ENCODE measurements at regions of chr7 and their contacts with region 1.

Region 1: DNA sequence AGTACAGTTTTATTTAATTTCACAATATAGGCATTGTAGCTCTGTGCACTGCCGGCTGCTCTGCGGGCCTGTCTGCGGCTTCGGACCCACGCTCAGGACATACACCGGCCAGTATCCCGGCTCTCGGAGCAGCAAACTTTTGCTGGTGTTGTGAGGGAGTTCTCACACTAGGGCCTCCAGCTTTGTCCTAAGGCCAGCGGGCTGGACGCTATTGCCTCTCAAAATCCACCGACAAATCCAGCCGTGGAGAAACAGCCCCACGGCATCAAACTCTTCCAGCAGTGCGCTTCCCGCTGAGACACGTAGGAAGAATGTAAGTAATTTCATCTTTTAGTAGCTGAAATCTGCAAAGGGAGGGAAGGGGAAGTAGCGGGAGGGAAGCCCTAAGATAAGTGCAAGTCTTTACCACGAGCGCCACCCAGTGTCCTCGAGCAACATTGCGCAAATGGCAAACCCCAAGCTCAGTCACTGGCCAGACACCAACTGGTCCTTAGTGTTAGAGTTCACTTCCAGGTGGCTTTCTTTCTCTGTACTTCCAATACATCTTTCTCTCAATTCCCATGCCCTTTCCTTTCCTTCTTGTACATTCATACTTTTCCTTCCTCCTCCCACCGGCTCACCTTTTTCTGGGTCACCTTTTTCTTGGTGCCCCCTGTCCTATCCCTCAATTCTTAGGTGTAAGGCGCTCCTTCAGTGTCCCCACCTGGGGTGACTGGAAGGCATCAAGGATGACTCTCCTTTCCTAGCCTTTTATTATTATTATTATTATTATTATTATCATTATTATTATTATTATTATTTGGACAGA is 3.0 kb upstream of the DLX5 start:
- DNase-seq: peak in 4 of 5 donors; percentile 57 to 66 (median 61)
- H3K4me3 ChIP-seq: peak overlapping the region in 1 of 2 donors; percentile 26
- H3K4me3 Mint-ChIP-seq: peak overlapping the region; percentile 77 to 88 (median 84)
- H3K27ac ChIP-seq: no peak overlapping the region
- H3K27ac Mint-ChIP-seq: peak overlapping the region in 2 of 7 donors; percentile 42 to 53
- H3K4me1 ChIP-seq: peaks cover 17% of the 10 kb centered on the region
- H3K4me1 Mint-ChIP-seq: peaks cover 28 to 43% (median 36%) of the 10 kb centered on the region in 4 donors
- H3K27me3 ChIP-seq: peaks cover 43% of the 10 kb centered on the region
- H3K27me3 Mint-ChIP-seq: peaks cover 51 to 64% of the 10 kb centered on the region in 2 donors

Region 2: GRCh38 chr7:96075510-96076349 is 951.9 kb before region 1 on chr7:
- CTCF ChIA-PET with region 1: interaction called, 37 read pairs
- POLR2A ChIA-PET with region 1: interaction called, 4 read pairs
- intact Hi-C with region 1: loop called (anchors 1 kb)
- DNase-seq: peak; percentile 36 to 49 (median 42)
- H3K4me3 ChIP-seq: peak overlapping the region in 1 of 2 donors; percentile 30
- H3K4me3 Mint-ChIP-seq: peak overlapping the region; percentile 86 to 95 (median 88)
- H3K27ac ChIP-seq: no peak overlapping the region
- H3K27ac Mint-ChIP-seq: no peak overlapping the region
- H3K4me1 ChIP-seq: peaks cover 10% of the 10 kb centered on the region
- H3K4me1 Mint-ChIP-seq: peaks cover 0 to 9% (median 6%) of the 10 kb centered on the region in 4 donors
- H3K27me3 ChIP-seq: peaks cover 15% of the 10 kb centered on the region
- H3K27me3 Mint-ChIP-seq: peaks cover 17 to 27% of the 10 kb centered on the region in 2 donors

Region 3: GRCh38 chr7:96414931-96415292 is 612.7 kb before region 1 on chr7:
- CTCF ChIA-PET with region 1: interaction called, 10 read pairs
- POLR2A ChIA-PET with region 1: no interaction called
- intact Hi-C with region 1: no loop called
- DNase-seq: peak; percentile 20 to 47 (median 43)
- H3K4me3 ChIP-seq: no peak overlapping the region
- H3K4me3 Mint-ChIP-seq: no peak overlapping the region
- H3K27ac ChIP-seq: no peak overlapping the region
- H3K27ac Mint-ChIP-seq: no peak overlapping the region
- H3K4me1 ChIP-seq: no peaks in the 10 kb centered on the region
- H3K4me1 Mint-ChIP-seq: no peaks in the 10 kb centered on the region
- H3K27me3 ChIP-seq: no peaks in the 10 kb centered on the region
- H3K27me3 Mint-ChIP-seq: peaks cover 0 to 8% of the 10 kb centered on the region in 2 donors

Region 4: DNA sequence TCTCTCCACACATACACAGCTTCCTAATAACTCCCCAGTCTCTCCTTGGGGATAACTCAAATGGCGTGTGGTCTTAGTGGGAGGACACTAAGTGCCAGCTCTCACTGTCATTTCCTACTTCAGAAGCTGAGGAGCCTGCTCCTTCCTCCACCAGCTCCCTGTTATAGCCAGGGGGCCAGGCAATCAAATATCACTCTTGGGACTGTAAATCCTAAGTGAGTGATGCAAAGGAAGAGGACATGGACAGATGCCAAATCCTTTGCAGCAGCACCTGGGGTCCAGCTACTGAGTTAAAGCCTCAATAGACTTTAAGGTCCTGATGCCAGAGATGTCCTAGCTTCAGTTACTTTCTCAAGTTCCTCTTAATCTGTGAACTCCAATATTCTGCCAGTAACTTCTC is 352.1 kb before region 1 on chr7:
- CTCF ChIA-PET with region 1: no interaction called
- POLR2A ChIA-PET with region 1: no interaction called
- intact Hi-C with region 1: no loop called
- DNase-seq: no peak
- H3K4me3 ChIP-seq: no peak overlapping the region
- H3K4me3 Mint-ChIP-seq: no peak overlapping the region
- H3K27ac ChIP-seq: no peak overlapping the region
- H3K27ac Mint-ChIP-seq: no peak overlapping the region
- H3K4me1 ChIP-seq: no peaks in the 10 kb centered on the region
- H3K4me1 Mint-ChIP-seq: peaks cover 0 to 4% (median 0%) of the 10 kb centered on the region in 4 donors
- H3K27me3 ChIP-seq: no peaks in the 10 kb centered on the region
- H3K27me3 Mint-ChIP-seq: no peaks in the 10 kb centered on the region